ENCODE measurements at regions of chr5 and their contacts with region 1.

Region 1: DNA sequence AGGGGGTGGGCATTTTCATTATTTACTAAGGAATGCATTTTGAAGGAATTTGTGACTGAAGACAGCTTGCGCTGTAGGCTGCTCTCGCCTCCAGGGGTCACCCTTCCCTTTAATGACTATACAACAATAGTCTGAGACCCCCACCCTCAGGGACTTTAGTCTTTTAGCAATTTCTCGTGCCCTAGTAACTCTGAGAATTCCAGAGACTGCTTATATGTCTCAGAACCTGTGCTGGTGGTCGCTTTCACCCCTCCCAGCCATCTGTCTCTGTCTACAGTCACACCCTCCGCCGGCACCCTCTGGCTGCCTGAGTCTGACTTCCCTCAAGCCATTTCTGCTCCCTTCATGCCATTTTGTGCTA is 671.4 kb downstream of the NR2F1-AS1 start:
- DNase-seq: peak in 1 of 2 experiments; percentile 65
- H3K4me3 ChIP-seq: no peak overlapping the region
- H3K27ac ChIP-seq: no peak overlapping the region
- H3K4me1 ChIP-seq: peaks cover 2 to 22% (median 9%) of the 10 kb centered on the region in 4 experiments; a peak in 6 of 7 replicates
- H3K27me3 ChIP-seq: no peaks in the 10 kb centered on the region
- CTCF ChIP-seq: peak; percentile 59 to 77 (median 63)
- EP300 ChIP-seq: no peak
- POLR2A ChIP-seq: no peak
- RAD21 ChIP-seq: peak; percentile 85 to 86

Region 2: GRCh38 chr5:92864591-92864990 is 45.0 kb before region 1 on chr5:
- CTCF ChIA-PET with region 1: no interaction called
- POLR2A ChIA-PET with region 1: no interaction called
- DNase-seq: no peak
- H3K4me3 ChIP-seq: no peak overlapping the region
- H3K27ac ChIP-seq: no peak overlapping the region
- H3K4me1 ChIP-seq: no peaks in the 10 kb centered on the region
- H3K27me3 ChIP-seq: peaks cover 0 to 1% (median 0%) of the 10 kb centered on the region in 4 experiments; a peak in 1 of 7 replicates
- CTCF ChIP-seq: no peak
- EP300 ChIP-seq: no peak
- POLR2A ChIP-seq: no peak
- RAD21 ChIP-seq: no peak

Region 3: DNA sequence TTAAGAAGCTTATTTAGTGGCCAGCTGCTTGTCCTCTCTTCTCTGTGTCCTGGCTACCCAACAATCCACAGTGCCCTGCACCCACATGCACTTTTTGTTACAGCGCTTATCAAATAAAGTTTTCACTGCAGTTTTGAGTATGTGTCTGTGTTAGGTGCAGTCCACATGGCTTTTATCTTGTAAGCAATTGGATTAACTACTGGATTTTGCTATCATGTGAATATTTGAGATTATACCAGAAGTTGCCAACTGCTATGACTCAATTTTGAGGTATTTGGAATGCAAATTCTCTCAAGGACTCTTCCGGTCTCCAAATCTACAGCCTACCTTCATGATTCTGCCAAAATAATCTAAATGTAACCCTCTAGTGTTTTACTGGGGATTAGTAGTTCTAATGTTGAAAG is 18.7 kb before region 1 on chr5:
- CTCF ChIA-PET with region 1: interaction called, 10 read pairs
- POLR2A ChIA-PET with region 1: no interaction called
- DNase-seq: no peak
- H3K4me3 ChIP-seq: no peak overlapping the region
- H3K27ac ChIP-seq: no peak overlapping the region
- H3K4me1 ChIP-seq: peaks cover 0 to 2% (median 0%) of the 10 kb centered on the region in 4 experiments; a peak in 1 of 7 replicates
- H3K27me3 ChIP-seq: no peaks in the 10 kb centered on the region
- CTCF ChIP-seq: no peak
- EP300 ChIP-seq: no peak
- POLR2A ChIP-seq: no peak
- RAD21 ChIP-seq: no peak

Region 4: GRCh38 chr5:92922231-92922967 is 12.8 kb after region 1 on chr5:
- CTCF ChIA-PET with region 1: interaction called, 16 read pairs
- POLR2A ChIA-PET with region 1: no interaction called
- DNase-seq: no peak
- H3K4me3 ChIP-seq: no peak overlapping the region
- H3K27ac ChIP-seq: no peak overlapping the region
- H3K4me1 ChIP-seq: peaks cover 0 to 12% (median 7%) of the 10 kb centered on the region in 4 experiments; a peak in 4 of 7 replicates
- H3K27me3 ChIP-seq: no peaks in the 10 kb centered on the region
- CTCF ChIP-seq: no peak
- EP300 ChIP-seq: 0 out of 3 replicates have a peak, but pooled peaks of 1 of the 2 experiments have one; percentile 27
- POLR2A ChIP-seq: no peak
- RAD21 ChIP-seq: no peak

Region 5: DNA sequence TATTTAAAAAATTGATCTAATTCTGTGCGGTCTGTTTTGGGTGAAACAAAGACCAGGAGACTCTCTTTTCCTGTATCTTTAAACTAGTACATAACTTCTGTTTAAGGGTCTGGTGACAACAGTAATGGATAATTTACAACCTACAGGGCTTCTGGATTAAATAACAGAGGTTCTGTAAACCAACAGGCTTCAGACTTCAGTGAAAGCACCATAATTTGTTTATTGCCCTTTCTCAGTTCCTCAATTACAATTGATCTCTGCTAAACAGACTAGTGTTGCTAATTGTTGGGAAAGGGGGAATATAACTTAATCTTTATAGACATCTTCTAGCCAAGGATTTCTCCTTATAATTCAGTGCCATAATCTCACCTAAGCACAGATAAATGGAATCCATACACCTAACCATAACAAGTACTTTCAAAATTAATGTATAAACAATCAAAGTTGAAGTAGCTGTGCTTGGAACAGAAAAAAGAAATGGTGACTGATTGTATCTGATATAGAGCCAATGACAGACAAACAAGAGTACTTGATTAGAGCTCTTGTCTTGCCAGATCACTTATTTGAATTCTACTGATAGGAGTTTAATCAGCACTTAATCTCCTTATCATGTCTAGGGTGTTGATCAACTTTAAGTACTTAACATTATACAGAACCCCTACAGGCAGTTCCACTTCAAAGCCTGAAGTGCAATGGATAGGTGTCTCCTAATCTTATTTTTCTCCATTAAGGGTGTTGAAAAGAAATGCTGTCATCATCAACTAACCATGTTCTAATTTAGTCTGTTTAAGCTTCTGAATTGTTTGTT is 135.5 kb after region 1 on chr5:
- CTCF ChIA-PET with region 1: no interaction called
- POLR2A ChIA-PET with region 1: no interaction called
- DNase-seq: no peak
- H3K4me3 ChIP-seq: no peak overlapping the region
- H3K27ac ChIP-seq: no peak overlapping the region
- H3K4me1 ChIP-seq: no peaks in the 10 kb centered on the region
- H3K27me3 ChIP-seq: no peaks in the 10 kb centered on the region
- CTCF ChIP-seq: no peak
- EP300 ChIP-seq: no peak
- POLR2A ChIP-seq: no peak
- RAD21 ChIP-seq: no peak